MCF 10A (cell line): ENCODE measurements at regions of chr3 and their contacts with region 1.

Region 1: GRCh38 chr3:122679085-122679881 is 1.4 kb upstream of the PARP14 start:
- DNase-seq: peak; percentile 86
- H3K4me3 Mint-ChIP-seq: peak overlapping the region; percentile 77
- H3K27ac Mint-ChIP-seq: peak overlapping the region; percentile 83
- H3K4me1 Mint-ChIP-seq: peaks cover 16% of the 10 kb centered on the region
- H3K27me3 Mint-ChIP-seq: no peaks in the 10 kb centered on the region
- CTCF ChIP-seq: peak; percentile 77

Region 2: DNA sequence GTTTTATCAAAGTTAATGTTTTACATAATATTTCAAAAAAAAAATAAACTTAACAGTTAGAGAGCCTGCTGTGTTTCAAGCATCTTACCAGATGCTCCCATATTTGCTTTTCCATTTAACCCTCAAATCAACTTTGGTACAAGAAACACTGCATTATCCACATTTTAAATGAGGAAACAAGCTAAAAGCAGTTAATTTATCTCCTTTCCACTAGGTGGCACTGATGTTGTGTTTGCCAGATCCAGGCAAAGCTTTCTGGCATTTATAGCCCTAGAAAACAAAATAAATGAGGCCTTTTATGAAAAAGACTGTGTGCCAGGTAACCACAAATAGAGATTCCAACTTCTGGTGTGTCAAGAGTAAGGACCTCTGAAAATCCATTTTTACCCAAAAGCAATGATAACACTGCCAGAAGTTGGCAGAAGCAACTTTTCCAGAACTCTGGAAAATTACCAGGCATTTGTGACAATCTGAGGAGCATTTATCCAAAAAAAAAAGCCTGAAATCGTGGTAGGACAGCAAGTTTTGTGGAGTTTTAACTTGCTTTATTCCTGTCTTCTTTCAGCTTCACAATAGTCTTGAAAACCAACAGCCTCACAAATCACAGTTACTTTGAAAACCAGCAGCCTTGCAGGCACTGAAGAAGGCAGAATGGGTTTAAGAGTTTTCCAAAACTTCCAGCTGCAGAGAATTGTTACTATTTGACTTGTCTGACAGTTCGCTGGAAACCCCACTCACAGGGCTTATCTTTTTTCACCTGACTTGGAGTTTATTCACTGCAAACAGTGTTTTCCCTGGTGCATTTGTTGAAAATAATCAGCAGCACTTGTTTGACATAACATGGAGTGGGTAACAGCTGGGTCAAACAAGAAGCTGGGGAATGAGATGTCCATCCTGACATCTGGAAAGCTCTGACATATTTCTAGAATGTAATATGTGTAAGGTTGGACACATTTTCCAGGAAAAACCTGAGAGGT is 286.1 kb before region 1 on chr3:
- CTCF ChIA-PET with region 1: interaction called, 10 read pairs
- POLR2A ChIA-PET with region 1: interaction called, 4 read pairs
- intact Hi-C with region 1: loop called (anchors 1 kb)
- DNase-seq: peak; percentile 56
- H3K4me3 Mint-ChIP-seq: no peak overlapping the region
- H3K27ac Mint-ChIP-seq: peak overlapping the region; percentile 89
- H3K4me1 Mint-ChIP-seq: peaks cover 25% of the 10 kb centered on the region
- H3K27me3 Mint-ChIP-seq: no peaks in the 10 kb centered on the region
- CTCF ChIP-seq: peak; percentile 67

Region 3: DNA sequence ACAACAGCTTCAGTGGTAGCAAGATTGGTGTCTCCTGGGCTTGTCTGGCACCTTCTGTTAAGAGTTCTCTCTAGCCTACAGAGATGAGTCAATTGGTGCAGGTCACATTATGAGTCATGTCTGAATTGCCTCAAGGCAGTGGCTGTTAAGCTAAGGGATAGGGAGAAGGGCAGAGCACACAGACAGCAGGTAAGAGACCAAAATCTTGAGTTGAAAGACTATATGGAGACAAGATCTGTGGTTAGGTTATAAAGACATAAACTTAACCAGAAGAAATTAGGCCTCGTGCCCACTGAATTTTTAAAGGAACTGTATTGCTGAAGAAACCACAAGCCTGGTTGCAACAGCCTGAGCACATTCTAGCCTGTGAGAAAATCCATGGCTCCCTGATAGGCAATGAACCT is 145.3 kb before region 1 on chr3:
- CTCF ChIA-PET with region 1: interaction called, 11 read pairs
- POLR2A ChIA-PET with region 1: interaction called, 4 read pairs
- intact Hi-C with region 1: no loop called
- DNase-seq: peak; percentile 98
- H3K4me3 Mint-ChIP-seq: no peak overlapping the region
- H3K27ac Mint-ChIP-seq: peak overlapping the region; percentile 21
- H3K4me1 Mint-ChIP-seq: peaks cover 28% of the 10 kb centered on the region
- H3K27me3 Mint-ChIP-seq: no peaks in the 10 kb centered on the region
- CTCF ChIP-seq: no peak

Region 4: GRCh38 chr3:122564155-122564912 is 114.9 kb before region 1 on chr3 and contains the starts of genes DTX3L and PARP9:
- CTCF ChIA-PET with region 1: interaction called, 140 read pairs
- POLR2A ChIA-PET with region 1: interaction called, 30 read pairs
- intact Hi-C with region 1: loop called (anchors 1 kb)
- DNase-seq: peak; percentile 83
- H3K4me3 Mint-ChIP-seq: peak within 1 kb of the TSS; percentile 92
- H3K27ac Mint-ChIP-seq: peak within 1 kb of the TSS; percentile 94
- H3K4me1 Mint-ChIP-seq: peaks cover 11% of the 10 kb centered on the region
- H3K27me3 Mint-ChIP-seq: no peaks in the 10 kb centered on the region
- CTCF ChIP-seq: no peak
- total RNA-seq, gene DTX3L: 19.0 and 19.1 TPM in 2 replicates
- total RNA-seq, gene PARP9: 6.3 and 11.9 TPM in 2 replicates

Region 5: GRCh38 chr3:123719862-123720453 is 1040.7 kb after region 1 on chr3:
- CTCF ChIA-PET with region 1: no interaction called
- POLR2A ChIA-PET with region 1: no interaction called
- intact Hi-C with region 1: no loop called
- DNase-seq: no peak
- H3K4me3 Mint-ChIP-seq: no peak overlapping the region
- H3K27ac Mint-ChIP-seq: no peak overlapping the region
- H3K4me1 Mint-ChIP-seq: no peaks in the 10 kb centered on the region
- H3K27me3 Mint-ChIP-seq: peaks cover 12% of the 10 kb centered on the region
- CTCF ChIP-seq: no peak